Activated B cell treated with CpG ODN at 0.5 μM for 24 hours (primary cell): ENCODE measurements at regions of chr1 and their contacts with region 1.

Region 1: DNA sequence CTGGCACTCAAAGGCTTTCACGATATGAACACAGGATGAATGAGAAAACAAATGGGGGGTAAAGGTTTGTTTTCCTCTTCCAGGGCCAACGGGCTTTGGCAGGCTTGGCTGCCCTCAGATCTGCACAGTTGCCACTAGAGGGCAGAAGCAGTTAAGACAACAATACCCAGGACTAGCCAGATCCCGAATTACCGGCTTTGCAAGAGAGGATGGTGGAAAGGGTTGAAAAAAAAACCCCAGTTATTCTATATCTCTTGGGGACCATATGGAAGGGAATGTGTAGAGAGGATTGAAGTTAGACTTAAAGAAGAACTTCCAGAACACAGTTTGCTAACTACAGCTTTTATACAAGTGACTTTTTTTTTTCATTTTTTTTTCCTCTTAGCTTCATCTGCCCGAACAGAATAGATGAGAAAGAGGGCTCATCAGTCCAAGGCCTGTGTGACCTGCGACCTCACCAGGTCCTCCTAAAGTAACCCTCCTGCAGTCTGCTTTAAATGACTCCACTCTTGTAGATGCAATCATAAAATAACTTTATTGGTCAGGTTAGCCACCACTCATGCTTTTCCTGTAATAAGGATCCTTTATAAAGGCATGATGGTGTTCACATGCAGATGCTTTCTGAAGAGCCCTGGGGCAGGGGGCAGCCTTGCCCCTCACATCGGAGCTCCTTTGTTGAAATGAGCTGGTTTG is 10.7 kb downstream of the FMOD start:
- DNase-seq: no peak
- ATAC-seq: peak; percentile 73
- H3K4me3 Mint-ChIP-seq: no peak overlapping the region
- H3K27ac Mint-ChIP-seq: no peak overlapping the region
- H3K4me1 Mint-ChIP-seq: peaks cover 21% of the 10 kb centered on the region
- H3K27me3 Mint-ChIP-seq: peaks cover 17% of the 10 kb centered on the region
- CTCF ChIP-seq: peak; percentile 35

Region 2: DNA sequence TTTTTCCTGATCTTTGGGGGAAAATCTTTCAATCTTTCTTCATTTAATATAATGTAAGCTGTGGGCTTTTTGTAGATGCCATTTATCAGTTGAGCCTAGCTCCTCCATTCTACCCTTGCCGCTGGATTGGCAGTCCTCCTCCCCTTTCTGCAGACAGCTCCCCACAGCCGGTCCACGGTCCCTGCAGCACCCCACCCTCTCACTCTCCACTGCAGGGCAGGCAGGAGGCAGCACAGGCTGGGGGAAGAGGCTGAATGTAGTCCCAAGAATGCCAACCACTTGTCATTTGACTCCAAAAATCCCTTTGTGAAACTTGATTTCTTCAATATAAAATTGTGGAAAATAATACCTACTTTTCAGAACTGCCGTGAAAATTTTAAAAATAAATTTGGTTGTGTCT is 726.7 kb before region 1 on chr1:
- CTCF ChIA-PET with region 1: no interaction called
- POLR2A ChIA-PET with region 1: no interaction called
- intact Hi-C with region 1: no loop called
- DNase-seq: no peak
- ATAC-seq: no peak
- H3K4me3 Mint-ChIP-seq: no peak overlapping the region
- H3K27ac Mint-ChIP-seq: no peak overlapping the region
- H3K4me1 Mint-ChIP-seq: peaks cover 44% of the 10 kb centered on the region
- H3K27me3 Mint-ChIP-seq: no peaks in the 10 kb centered on the region
- CTCF ChIP-seq: no peak

Region 3: GRCh38 chr1:203267347-203267846 is 72.9 kb before region 1 on chr1:
- CTCF ChIA-PET with region 1: interaction called, 525 read pairs
- POLR2A ChIA-PET with region 1: interaction called, 122 read pairs
- intact Hi-C with region 1: loop called (anchors 1 kb)
- DNase-seq: peak; percentile 62
- ATAC-seq: peak; percentile 59
- H3K4me3 Mint-ChIP-seq: peak overlapping the region; percentile 94
- H3K27ac Mint-ChIP-seq: peak overlapping the region; percentile 87
- H3K4me1 Mint-ChIP-seq: peaks cover 43% of the 10 kb centered on the region
- H3K27me3 Mint-ChIP-seq: no peaks in the 10 kb centered on the region
- CTCF ChIP-seq: peak; percentile 64

Region 4: GRCh38 chr1:203304919-203305808 is 35.1 kb before region 1 on chr1 and contains the start of gene BTG2:
- CTCF ChIA-PET with region 1: interaction called, 148 read pairs
- POLR2A ChIA-PET with region 1: interaction called, 194 read pairs
- intact Hi-C with region 1: loop called (anchors 1 kb)
- DNase-seq: peak; percentile 86
- ATAC-seq: peak; percentile 79
- H3K4me3 Mint-ChIP-seq: peak within 1 kb of the TSS; percentile 92
- H3K27ac Mint-ChIP-seq: peak within 1 kb of the TSS; percentile 98
- H3K4me1 Mint-ChIP-seq: peaks cover 70% of the 10 kb centered on the region
- H3K27me3 Mint-ChIP-seq: no peaks in the 10 kb centered on the region
- CTCF ChIP-seq: no peak
- total RNA-seq, gene BTG2: 419 and 448 TPM in 2 replicates

Region 5: GRCh38 chr1:203361945-203362719 is 21.9 kb after region 1 on chr1:
- CTCF ChIA-PET with region 1: interaction called, 16 read pairs
- POLR2A ChIA-PET with region 1: interaction called, 3 read pairs
- intact Hi-C with region 1: no loop called
- DNase-seq: peak; percentile 31
- ATAC-seq: peak; percentile 92
- H3K4me3 Mint-ChIP-seq: no peak overlapping the region
- H3K27ac Mint-ChIP-seq: peak overlapping the region; percentile 65
- H3K4me1 Mint-ChIP-seq: peaks cover 20% of the 10 kb centered on the region
- H3K27me3 Mint-ChIP-seq: peaks cover 11% of the 10 kb centered on the region
- CTCF ChIP-seq: no peak

Region 6: GRCh38 chr1:203486618-203487370 is 146.5 kb after region 1 on chr1:
- CTCF ChIA-PET with region 1: interaction called, 297 read pairs
- POLR2A ChIA-PET with region 1: interaction called, 16 read pairs
- intact Hi-C with region 1: loop called (anchors 1 kb)
- DNase-seq: no peak
- ATAC-seq: no peak
- H3K4me3 Mint-ChIP-seq: peak overlapping the region; percentile 83
- H3K27ac Mint-ChIP-seq: no peak overlapping the region
- H3K4me1 Mint-ChIP-seq: peaks cover 5% of the 10 kb centered on the region
- H3K27me3 Mint-ChIP-seq: peaks cover 2% of the 10 kb centered on the region
- CTCF ChIP-seq: no peak